ENCODE measurements at regions of chr1 and their contacts with region 1.

Region 1: GRCh38 chr1:154669464-154670282 is 61.7 kb upstream of the ADAR start:
- DNase-seq: peak; percentile 89
- H3K4me3 ChIP-seq: no peak overlapping the region
- H3K27ac ChIP-seq: no peak overlapping the region
- H3K4me1 ChIP-seq: no peaks in the 10 kb centered on the region
- H3K27me3 ChIP-seq: no peaks in the 10 kb centered on the region; the same call in 1 of the 2 replicates
- CTCF ChIP-seq: peak; percentile 80
- EP300 ChIP-seq: no peak
- RAD21 ChIP-seq: peak; percentile 98

Region 2: DNA sequence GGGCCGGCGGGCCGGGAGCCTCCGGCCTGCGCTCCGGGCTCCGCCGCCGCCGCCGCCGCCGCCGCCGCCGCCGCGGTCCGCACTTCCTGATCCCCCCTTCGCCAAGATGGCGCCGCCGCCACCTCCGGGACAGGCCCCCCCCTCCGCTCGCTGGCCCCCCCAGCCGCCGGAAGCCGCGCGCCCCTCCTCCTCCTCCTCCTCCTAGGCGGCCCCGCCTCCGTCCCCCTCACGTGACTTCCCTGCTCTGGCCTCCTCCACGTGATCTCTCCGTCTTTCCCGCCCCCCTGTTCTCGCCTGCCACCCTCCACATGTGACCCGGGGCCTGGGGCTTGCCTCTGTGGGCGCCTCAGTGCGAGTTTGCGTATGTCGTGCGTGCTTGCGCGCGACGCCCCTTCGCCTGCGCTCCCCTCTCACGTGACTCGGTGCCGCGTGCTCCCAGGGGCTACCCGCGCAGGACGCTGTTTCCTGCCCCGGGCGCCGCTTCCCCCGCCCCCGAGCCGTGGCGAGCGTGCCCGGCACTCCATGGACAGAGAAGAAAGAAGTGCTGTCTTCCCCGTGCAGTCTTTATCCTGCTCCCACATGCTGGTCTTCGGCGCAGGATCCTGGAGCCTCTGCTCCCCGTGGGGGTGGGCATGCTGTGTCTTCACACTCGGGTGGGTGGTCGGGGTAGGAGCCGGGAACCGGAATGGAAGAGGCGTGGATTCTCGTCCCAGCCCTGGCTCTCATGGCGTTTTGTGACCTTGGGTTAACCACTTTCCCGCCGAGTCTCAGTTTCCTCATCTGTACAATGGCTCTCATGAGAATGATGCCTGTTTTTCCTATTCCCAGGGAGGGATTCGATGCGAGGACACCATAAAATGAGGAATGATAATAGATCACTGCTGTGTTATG is 110.9 kb before region 1 on chr1 and contains the start of gene UBE2Q1:
- CTCF ChIA-PET with region 1: interaction called, 14 read pairs
- POLR2A ChIA-PET with region 1: no interaction called
- DNase-seq: peak; percentile 98
- H3K4me3 ChIP-seq: peak within 1 kb of the TSS; percentile 87 to 94
- H3K27ac ChIP-seq: peak within 1 kb of the TSS; percentile 75 to 96
- H3K4me1 ChIP-seq: peaks cover 7 to 32% of the 10 kb centered on the region in 2 experiments; a peak in 2 of 4 replicates
- H3K27me3 ChIP-seq: no peaks in the 10 kb centered on the region
- CTCF ChIP-seq: no peak
- EP300 ChIP-seq: peak; percentile 36 to 51; a peak in 2 of 4 replicates
- RAD21 ChIP-seq: no peak
- polyA plus RNA-seq, gene UBE2Q1: 12.5 and 15.2 TPM in 2 replicates

Region 3: DNA sequence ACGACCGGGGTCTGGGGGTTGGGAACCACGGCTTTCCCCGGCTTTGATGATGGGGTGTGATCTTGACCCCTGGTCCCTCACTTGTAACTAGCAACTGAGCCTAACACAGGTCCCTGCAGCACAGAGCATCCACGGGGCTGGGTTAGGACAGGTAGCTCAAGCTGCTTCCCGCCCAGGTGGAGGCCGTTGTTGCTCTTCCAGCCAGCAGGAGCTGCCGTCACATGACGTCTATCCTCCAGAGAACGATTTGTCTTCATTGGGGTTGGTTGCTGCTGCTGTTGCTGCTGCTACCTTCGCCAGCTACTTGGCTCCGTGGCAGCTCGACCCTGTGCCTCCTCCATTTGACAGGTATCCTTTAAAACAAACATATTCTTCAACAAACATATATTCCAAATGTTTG is 12.6 kb after region 1 on chr1:
- CTCF ChIA-PET with region 1: interaction called, 26 read pairs
- POLR2A ChIA-PET with region 1: no interaction called
- DNase-seq: no peak
- H3K4me3 ChIP-seq: no peak overlapping the region
- H3K27ac ChIP-seq: no peak overlapping the region
- H3K4me1 ChIP-seq: no peaks in the 10 kb centered on the region; a peak in 1 of 4 replicates
- H3K27me3 ChIP-seq: peaks cover 12% of the 10 kb centered on the region
- CTCF ChIP-seq: no peak
- EP300 ChIP-seq: no peak
- RAD21 ChIP-seq: no peak

Region 4: DNA sequence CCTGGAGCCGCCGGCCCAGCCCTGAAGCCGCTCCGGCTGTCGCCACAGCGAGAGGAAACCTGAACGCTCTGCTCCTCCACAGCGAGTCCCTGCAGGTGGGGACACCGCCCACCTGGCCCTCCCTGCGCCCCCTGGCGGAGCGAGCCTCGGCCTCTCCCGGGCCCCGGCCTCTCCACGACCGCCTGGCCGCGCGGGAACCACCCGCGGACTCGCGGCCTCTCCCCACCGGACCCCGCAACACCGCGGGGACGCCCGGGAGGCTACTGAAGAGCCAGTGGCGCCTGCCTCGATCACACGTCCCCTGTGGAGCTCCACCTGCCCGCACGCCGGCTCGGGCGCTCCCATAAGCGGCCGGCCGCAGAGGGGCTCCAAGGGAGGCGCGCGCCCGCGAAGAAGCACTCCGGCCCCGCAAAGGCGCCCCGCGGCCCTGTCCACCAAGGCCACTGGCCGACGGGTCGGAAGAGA is 90.8 kb after region 1 on chr1:
- CTCF ChIA-PET with region 1: interaction called, 50 read pairs
- POLR2A ChIA-PET with region 1: no interaction called
- DNase-seq: peak; percentile 91
- H3K4me3 ChIP-seq: peak overlapping the region; percentile 35 to 56
- H3K27ac ChIP-seq: no peak overlapping the region
- H3K4me1 ChIP-seq: no peaks in the 10 kb centered on the region; a peak in 1 of 4 replicates
- H3K27me3 ChIP-seq: peaks cover 26% of the 10 kb centered on the region
- CTCF ChIP-seq: peak; percentile 66
- EP300 ChIP-seq: no peak
- RAD21 ChIP-seq: peak; percentile 60

Region 5: GRCh38 chr1:154863315-154864174 is 193.9 kb after region 1 on chr1:
- CTCF ChIA-PET with region 1: interaction called, 20 read pairs
- POLR2A ChIA-PET with region 1: interaction called, 3 read pairs
- DNase-seq: peak; percentile 53
- H3K4me3 ChIP-seq: no peak overlapping the region; a peak in 1 of 4 replicates
- H3K27ac ChIP-seq: no peak overlapping the region
- H3K4me1 ChIP-seq: peaks cover 5 to 31% of the 10 kb centered on the region in 2 experiments; a peak in 2 of 4 replicates
- H3K27me3 ChIP-seq: peaks cover 8% of the 10 kb centered on the region; the same call in 1 of the 2 replicates
- CTCF ChIP-seq: peak; percentile 53
- EP300 ChIP-seq: no peak
- RAD21 ChIP-seq: 0 out of 2 replicates have a peak, but pooled peaks have one; percentile 5

Region 6: GRCh38 chr1:154884869-154885701 is 215.4 kb after region 1 on chr1:
- CTCF ChIA-PET with region 1: interaction called, 74 read pairs
- POLR2A ChIA-PET with region 1: no interaction called
- DNase-seq: no peak
- H3K4me3 ChIP-seq: no peak overlapping the region
- H3K27ac ChIP-seq: no peak overlapping the region
- H3K4me1 ChIP-seq: peaks cover 0 to 8% of the 10 kb centered on the region in 2 experiments; a peak in 1 of 4 replicates
- H3K27me3 ChIP-seq: peaks cover 18% of the 10 kb centered on the region
- CTCF ChIP-seq: no peak
- EP300 ChIP-seq: no peak
- RAD21 ChIP-seq: no peak

Region 7: GRCh38 chr1:155001675-155002463 is 332.2 kb after region 1 on chr1:
- CTCF ChIA-PET with region 1: interaction called, 10 read pairs
- POLR2A ChIA-PET with region 1: no interaction called
- DNase-seq: peak; percentile 96
- H3K4me3 ChIP-seq: peak overlapping the region; percentile 57 to 71
- H3K27ac ChIP-seq: peak overlapping the region; percentile 92 to 96
- H3K4me1 ChIP-seq: peaks cover 19 to 33% of the 10 kb centered on the region in 2 experiments
- H3K27me3 ChIP-seq: no peaks in the 10 kb centered on the region
- CTCF ChIP-seq: peak; percentile 69
- EP300 ChIP-seq: no peak
- RAD21 ChIP-seq: no peak